ENCODE measurements at regions of chr19 and their contacts with region 1.

Region 1: DNA sequence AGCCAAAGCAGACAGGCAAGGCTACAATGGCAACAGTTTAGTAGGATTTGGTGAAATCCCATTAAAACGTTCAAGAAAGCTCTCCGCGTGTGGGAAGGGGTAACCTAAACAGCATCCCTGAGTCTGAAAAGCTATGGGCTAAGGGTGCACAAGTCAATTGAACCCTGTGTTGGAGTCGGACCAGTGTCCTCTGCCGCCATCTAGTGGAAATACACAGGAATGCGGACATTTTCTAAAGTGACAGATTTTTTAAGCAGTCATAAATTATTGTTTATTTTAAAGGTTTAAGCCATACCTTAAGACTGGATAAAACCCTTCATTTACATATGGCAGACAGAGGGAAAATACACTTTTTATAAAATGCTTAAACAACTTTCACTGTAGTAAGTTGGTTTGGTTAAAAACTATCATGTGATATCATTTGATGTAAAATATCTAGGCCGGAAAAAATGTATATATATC is 26.5 kb upstream of the LSM14A start:
- DNase-seq: peak; percentile 62
- CTCF ChIP-seq: peak; percentile 74

Region 2: DNA sequence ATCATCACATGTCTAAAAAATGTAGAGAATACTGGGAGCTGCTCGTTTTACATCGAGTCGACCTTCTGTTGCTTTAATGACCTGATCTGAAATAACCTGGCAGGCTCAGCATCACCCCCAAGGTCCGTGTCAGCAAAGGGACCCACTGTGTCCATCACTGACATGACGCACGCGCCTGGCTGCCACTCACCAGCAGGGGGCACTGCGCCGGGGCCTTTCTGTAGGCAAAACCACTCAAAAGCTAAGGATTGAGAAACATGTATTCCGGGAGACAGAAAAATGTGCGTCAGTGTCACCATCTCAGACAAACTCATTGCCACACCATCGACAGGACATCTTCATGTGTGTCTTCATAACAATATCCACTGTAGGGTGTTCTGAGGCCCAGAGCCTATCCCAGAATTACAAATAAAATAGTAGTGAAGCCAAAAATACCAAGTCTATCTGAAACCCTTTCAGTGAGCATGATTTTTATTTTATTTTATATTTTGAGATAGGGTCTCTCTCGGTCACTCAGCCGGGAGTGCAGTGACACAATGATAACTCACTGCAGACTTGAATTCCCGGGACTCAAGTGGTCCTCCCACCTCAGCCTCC is 103.7 kb before region 1 on chr19:
- CTCF ChIA-PET with region 1: interaction called, 20 read pairs
- POLR2A ChIA-PET with region 1: no interaction called
- DNase-seq: peak; percentile 62
- CTCF ChIP-seq: peak; percentile 78

Region 3: GRCh38 chr19:34120846-34121639 is 24.7 kb before region 1 on chr19:
- CTCF ChIA-PET with region 1: interaction called, 34 read pairs
- POLR2A ChIA-PET with region 1: no interaction called
- DNase-seq: peak; percentile 64
- CTCF ChIP-seq: peak; percentile 62

Region 4: GRCh38 chr19:34184880-34185491 is 39.2 kb after region 1 on chr19:
- CTCF ChIA-PET with region 1: no interaction called
- POLR2A ChIA-PET with region 1: no interaction called
- DNase-seq: no peak
- CTCF ChIP-seq: no peak

Region 5: GRCh38 chr19:34359140-34359953 is 213.6 kb after region 1 on chr19:
- CTCF ChIA-PET with region 1: no interaction called
- POLR2A ChIA-PET with region 1: no interaction called
- DNase-seq: peak; percentile 99
- CTCF ChIP-seq: peak; percentile 58